Ascending aorta (tissue), 2 donors: ENCODE measurements at regions of chr9 and their contacts with region 1.

Region 1: DNA sequence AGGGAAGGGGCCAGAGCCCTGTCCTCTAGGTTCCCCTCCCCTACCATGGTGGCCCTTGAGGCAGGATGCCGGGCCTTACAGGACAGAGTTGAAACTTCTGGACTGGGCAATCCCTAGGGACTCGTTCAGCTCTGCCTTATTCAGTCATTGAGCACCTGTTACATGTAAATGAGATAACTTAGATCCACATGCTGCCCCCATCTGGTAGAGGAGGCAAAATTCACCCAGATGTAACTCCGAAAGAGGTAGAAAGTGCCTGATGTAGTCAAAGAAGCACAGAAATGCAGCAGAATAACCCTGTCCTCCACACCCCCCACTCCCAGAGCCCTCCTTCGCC is 1.5 kb downstream of the GGTA1 start:
- DNase-seq: peak; percentile 53 to 85
- H3K4me3 ChIP-seq: peak overlapping the region; percentile 67 to 76
- H3K27ac ChIP-seq: peak overlapping the region; percentile 90 to 93
- H3K4me1 ChIP-seq: peaks cover 3 to 21% of the 10 kb centered on the region in 2 donors
- H3K27me3 ChIP-seq: no peaks in the 10 kb centered on the region
- CTCF ChIP-seq: peak; percentile 64 to 83 (median 79)

Region 2: GRCh38 chr9:121463026-121463807 is 34.9 kb before region 1 on chr9:
- intact Hi-C with region 1: loop called (anchors 1 kb)
- DNase-seq: peak in 1 of 2 donors; percentile 81
- H3K4me3 ChIP-seq: no peak overlapping the region
- H3K27ac ChIP-seq: peak overlapping the region; percentile 21 to 47
- H3K4me1 ChIP-seq: peaks cover 6 to 14% of the 10 kb centered on the region in 2 donors
- H3K27me3 ChIP-seq: no peaks in the 10 kb centered on the region
- CTCF ChIP-seq: peak; percentile 72 to 93 (median 88)

Region 3: DNA sequence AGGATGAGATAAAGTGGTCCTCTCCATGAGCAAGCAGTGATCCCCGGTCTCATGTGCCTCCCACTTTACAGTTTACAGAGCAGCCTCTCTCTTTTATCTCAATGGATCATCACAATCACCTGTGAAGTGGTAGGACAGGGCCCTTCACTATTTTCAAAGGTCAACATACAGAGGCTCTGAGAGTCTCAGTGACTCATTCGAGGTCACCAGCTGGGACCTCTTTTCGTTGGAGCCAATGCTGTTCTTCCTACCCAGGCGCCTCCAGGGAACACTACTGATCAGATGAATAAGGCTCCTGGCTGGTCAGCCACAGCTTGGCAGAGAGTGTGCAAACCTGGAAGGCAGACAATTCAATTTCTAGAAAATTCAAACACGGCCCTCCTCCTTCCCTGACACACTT is 15.1 kb before region 1 on chr9:
- intact Hi-C with region 1: loop called (anchors 2 kb)
- DNase-seq: no peak
- H3K4me3 ChIP-seq: no peak overlapping the region
- H3K27ac ChIP-seq: peak overlapping the region; percentile 81 to 95
- H3K4me1 ChIP-seq: peaks cover 35 to 78% of the 10 kb centered on the region in 2 donors
- H3K27me3 ChIP-seq: no peaks in the 10 kb centered on the region
- CTCF ChIP-seq: no peak

Region 4: DNA sequence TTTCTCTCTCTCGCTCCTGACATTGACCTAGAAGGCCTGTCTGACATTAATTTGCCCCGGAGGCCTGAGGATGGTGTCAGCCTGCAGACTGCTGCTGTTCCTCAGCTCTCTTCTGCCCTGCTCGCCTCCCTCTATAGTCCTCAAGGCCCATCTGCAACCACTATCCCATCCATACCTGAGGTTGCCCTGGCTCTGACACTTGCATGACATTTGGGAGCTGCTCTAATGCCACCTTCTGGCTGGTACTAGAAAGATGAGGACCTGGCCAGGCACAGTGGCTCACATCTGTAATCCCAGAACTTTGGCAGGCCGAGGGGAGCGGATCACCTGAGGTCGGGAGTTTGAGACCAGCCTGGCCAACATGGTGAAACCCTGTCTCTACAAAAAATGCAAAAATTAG is 40.1 kb after region 1 on chr9:
- intact Hi-C with region 1: loop called (anchors 5 kb)
- DNase-seq: no peak
- H3K4me3 ChIP-seq: no peak overlapping the region
- H3K27ac ChIP-seq: no peak overlapping the region
- H3K4me1 ChIP-seq: peaks cover 0 to 7% of the 10 kb centered on the region in 2 donors
- H3K27me3 ChIP-seq: no peaks in the 10 kb centered on the region
- CTCF ChIP-seq: peak in 1 of 3 experiments; percentile 20

Region 5: DNA sequence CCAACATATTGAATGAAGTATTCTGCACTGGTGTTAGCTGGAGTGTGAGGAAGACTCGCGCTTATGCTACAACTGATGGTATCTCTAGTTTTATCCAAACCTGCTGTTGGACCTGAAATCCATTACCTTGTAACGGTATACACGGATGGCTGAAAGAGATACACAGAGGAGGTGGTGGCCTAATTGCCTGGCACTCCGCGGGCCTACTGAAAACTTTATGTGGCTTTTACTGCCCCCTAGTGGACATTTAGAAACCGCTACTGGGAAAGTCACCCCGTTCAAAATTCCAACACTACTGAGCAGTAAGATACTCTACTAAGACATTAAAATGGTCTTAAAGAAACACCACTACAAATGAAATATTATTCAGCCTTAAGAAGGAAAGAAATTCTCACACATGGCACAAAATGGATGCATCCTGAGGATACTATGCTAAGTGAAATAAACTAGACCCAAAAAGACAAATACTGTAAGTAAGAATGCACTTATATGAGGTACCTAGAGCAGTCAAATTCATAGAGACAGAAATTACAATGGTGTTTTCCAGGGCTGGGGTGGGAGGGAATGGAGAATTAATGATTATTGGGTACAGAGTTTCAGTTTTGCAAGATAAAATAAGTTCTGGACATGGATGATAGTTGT is 494.6 kb after region 1 on chr9:
- intact Hi-C with region 1: no loop called
- DNase-seq: peak in 1 of 2 donors; percentile 76
- H3K4me3 ChIP-seq: no peak overlapping the region
- H3K27ac ChIP-seq: no peak overlapping the region
- H3K4me1 ChIP-seq: peaks cover 0 to 1% of the 10 kb centered on the region in 2 donors
- H3K27me3 ChIP-seq: no peaks in the 10 kb centered on the region
- CTCF ChIP-seq: peak; percentile 75 to 79 (median 78)